ENCODE measurements at regions of chr12 and their contacts with region 1.

Region 1: DNA sequence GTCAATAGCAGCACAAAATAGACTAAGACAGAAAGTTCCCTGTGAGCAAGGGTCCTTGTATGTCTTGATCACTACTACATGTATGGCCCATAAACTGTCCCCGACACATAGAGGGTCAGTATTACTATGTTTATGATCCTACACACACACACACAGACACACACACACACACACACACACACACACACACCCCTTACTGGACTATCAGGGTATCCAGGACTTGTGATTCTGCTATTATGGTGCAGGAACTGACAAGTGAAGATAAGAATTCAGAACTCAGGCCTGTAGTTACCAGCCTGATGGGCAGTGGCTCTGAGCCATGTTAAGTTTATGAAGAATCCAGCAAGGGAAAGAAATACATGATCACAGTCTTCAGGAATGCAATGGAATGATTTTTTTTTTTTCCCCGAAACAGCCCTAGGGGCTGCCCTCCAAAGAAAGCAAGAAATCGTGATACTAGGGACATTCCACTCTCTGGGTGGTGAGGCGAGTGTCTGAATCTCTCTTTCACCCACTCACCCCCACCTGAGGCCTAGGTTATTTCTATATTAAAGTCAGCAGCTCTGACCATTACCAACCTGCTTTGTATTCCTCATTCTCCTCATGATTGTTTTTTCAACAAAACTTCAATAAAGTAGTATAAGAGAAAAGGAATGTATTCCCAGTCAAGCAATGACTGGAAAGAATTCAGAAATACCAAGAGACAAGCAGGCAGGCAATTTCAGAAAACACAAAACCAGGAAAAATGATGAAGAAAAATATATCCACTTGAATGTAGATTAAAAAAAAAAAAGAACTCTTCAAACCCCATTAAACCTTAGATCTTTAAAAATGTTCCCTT is 105.8 kb downstream of the AVPR1A start:
- DNase-seq: no peak
- ATAC-seq: peak in 1 of 8 donors; percentile 38
- H3K4me3 ChIP-seq: no peak overlapping the region
- H3K27ac ChIP-seq: no peak overlapping the region
- H3K4me1 ChIP-seq: no peaks in the 10 kb centered on the region
- H3K27me3 ChIP-seq: no peaks in the 10 kb centered on the region
- CTCF ChIP-seq: no peak

Region 2: DNA sequence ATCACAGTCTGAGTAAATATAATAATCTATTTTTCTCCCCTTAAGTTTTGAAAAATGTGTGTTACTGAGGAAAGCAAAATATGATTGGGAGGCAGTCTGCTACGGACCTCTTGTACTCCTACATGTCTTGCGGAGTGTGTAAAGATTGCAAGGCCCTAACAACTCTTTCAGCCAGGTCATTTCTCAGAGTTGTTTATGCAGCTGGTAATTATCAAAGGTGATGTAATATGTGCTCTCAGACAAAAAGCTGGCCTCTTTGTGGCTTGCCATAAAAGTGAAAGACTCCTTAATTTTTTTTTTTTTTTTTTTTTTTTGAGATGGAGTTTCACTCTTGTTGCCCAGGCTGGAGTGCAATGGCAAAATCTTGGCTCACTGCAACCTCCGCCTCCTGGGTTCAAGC is 619.2 kb before region 1 on chr12:
- intact Hi-C with region 1: loop called in 1 of 10 experiments (anchors 10 kb)
- DNase-seq: no peak
- ATAC-seq: no peak
- H3K4me3 ChIP-seq: no peak overlapping the region
- H3K27ac ChIP-seq: no peak overlapping the region
- H3K4me1 ChIP-seq: no peaks in the 10 kb centered on the region
- H3K27me3 ChIP-seq: peaks cover 0 to 12% (median 9%) of the 10 kb centered on the region in 7 donors
- CTCF ChIP-seq: no peak

Region 3: DNA sequence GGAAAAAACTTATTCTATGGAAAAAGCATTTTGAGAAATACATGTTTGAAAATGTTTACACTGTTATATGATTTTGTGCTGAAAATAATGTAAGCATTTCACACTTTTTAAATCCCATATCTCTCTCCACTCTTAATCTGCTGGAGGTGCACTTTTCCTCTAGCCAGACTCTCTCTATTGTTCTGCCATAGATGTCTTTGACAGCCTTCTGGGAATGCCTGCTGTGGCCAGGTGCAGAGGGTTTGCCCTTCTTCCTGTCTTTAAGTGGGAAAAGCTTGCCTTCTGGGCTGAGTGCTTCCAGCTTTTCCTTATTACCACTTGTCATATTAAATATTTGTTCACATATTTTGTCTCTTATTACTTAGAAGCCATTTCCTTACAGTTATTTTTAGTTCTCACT is 50.1 kb before region 1 on chr12:
- intact Hi-C with region 1: no loop called
- DNase-seq: no peak
- ATAC-seq: no peak
- H3K4me3 ChIP-seq: no peak overlapping the region
- H3K27ac ChIP-seq: no peak overlapping the region
- H3K4me1 ChIP-seq: no peaks in the 10 kb centered on the region
- H3K27me3 ChIP-seq: no peaks in the 10 kb centered on the region
- CTCF ChIP-seq: no peak